Prostate gland (tissue), 2 donors: ENCODE measurements at regions of chr21 and their contacts with region 1.

Region 1: GRCh38 chr21:36429947-36430546 is 44.9 kb downstream of the CHAF1B start:
- DNase-seq: peak; percentile 15
- H3K4me3 ChIP-seq: no peak overlapping the region
- H3K27ac ChIP-seq: no peak overlapping the region
- H3K4me1 ChIP-seq: no peaks in the 10 kb centered on the region
- H3K27me3 ChIP-seq: no peaks in the 10 kb centered on the region
- CTCF ChIP-seq: peak in 1 of 4 experiments; percentile 18
- POLR2A ChIP-seq: no peak

Region 2: DNA sequence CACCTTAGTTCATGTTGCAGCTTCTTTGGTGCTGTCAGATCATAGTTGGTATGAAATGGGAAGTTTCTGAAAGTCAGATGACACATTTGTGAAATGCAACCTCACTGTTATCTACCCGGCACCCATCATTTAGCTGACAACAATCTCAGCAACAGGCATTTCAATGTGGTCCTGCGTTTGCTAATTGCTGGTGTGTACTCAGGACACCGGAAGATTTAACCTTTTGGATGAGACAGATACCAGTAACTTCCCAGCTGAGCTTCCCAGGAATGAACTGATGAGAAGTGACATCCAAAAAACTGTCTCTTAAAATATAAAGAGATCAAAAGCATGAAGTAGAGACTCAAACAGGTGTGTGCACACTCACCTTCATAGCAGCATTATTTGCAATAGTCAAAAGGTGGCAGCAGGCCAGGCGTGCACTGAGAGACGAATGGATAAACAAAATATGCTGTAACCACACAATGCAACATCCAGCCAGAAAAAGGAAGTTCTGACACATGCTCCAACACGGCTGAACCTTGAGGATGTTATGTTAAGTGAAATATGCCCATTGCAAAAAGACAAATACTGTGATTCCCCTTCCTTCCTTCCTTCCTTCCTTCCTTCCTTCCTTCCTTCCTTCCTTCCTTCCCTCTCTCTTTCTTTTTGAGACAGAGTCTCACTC is 57.7 kb after region 1 on chr21:
- intact Hi-C with region 1: loop called (anchors 10 kb)
- DNase-seq: peak; percentile 90
- H3K4me3 ChIP-seq: no peak overlapping the region
- H3K27ac ChIP-seq: peak overlapping the region in 1 of 2 donors; percentile 5
- H3K4me1 ChIP-seq: peaks cover 3% of the 10 kb centered on the region
- H3K27me3 ChIP-seq: no peaks in the 10 kb centered on the region
- CTCF ChIP-seq: no peak
- POLR2A ChIP-seq: no peak

Region 3: GRCh38 chr21:37166733-37167132 is 736.7 kb after region 1 on chr21:
- intact Hi-C with region 1: no loop called
- DNase-seq: no peak
- H3K4me3 ChIP-seq: no peak overlapping the region
- H3K27ac ChIP-seq: no peak overlapping the region
- H3K4me1 ChIP-seq: no peaks in the 10 kb centered on the region
- H3K27me3 ChIP-seq: no peaks in the 10 kb centered on the region
- CTCF ChIP-seq: peak in 2 of 4 experiments; percentile 26 to 30
- POLR2A ChIP-seq: no peak